B cell (primary cell): ENCODE measurements at regions of chr12 and their contacts with region 1.

Region 1: GRCh38 chr12:63843721-63844390 is 644 bp upstream of the SRGAP1 start:
- DNase-seq: peak; percentile 85
- ATAC-seq: peak; percentile 93
- H3K4me3 ChIP-seq: peak overlapping the region in 4 of 5 experiments; percentile 50 to 64 (median 60)
- H3K4me3 Mint-ChIP-seq: peak overlapping the region; percentile 79
- H3K27ac ChIP-seq: no peak overlapping the region
- H3K27ac Mint-ChIP-seq: no peak overlapping the region
- H3K4me1 ChIP-seq: peaks cover 8 to 13% of the 10 kb centered on the region in 2 donors
- H3K4me1 Mint-ChIP-seq: peaks cover 11% of the 10 kb centered on the region
- H3K27me3 ChIP-seq: peaks cover 0 to 17% (median 12%) of the 10 kb centered on the region in 4 experiments
- H3K27me3 Mint-ChIP-seq: peaks cover 29% of the 10 kb centered on the region
- CTCF ChIP-seq: peak; percentile 75

Region 2: GRCh38 chr12:63779498-63780481 is 64.1 kb before region 1 on chr12 and contains the start of gene RXYLT1:
- CTCF ChIA-PET with region 1: no interaction called
- POLR2A ChIA-PET with region 1: no interaction called
- intact Hi-C with region 1: loop called (anchors 2 kb)
- DNase-seq: peak; percentile 92
- ATAC-seq: peak; percentile 93
- H3K4me3 ChIP-seq: peak within 1 kb of the TSS; percentile 76 to 90 (median 85)
- H3K4me3 Mint-ChIP-seq: peak within 1 kb of the TSS; percentile 98
- H3K27ac ChIP-seq: peak within 1 kb of the TSS; percentile 77 to 91
- H3K27ac Mint-ChIP-seq: peak within 1 kb of the TSS; percentile 95
- H3K4me1 ChIP-seq: peaks cover 6 to 8% of the 10 kb centered on the region in 2 donors
- H3K4me1 Mint-ChIP-seq: peaks cover 16% of the 10 kb centered on the region
- H3K27me3 ChIP-seq: no peaks in the 10 kb centered on the region
- H3K27me3 Mint-ChIP-seq: no peaks in the 10 kb centered on the region
- CTCF ChIP-seq: no peak
- total RNA-seq, gene RXYLT1: 16.2 and 16.5 TPM in 2 replicates

Region 3: GRCh38 chr12:64222009-64222765 is 378.3 kb after region 1 on chr12 and contains the start of gene KICS2:
- CTCF ChIA-PET with region 1: no interaction called
- POLR2A ChIA-PET with region 1: no interaction called
- intact Hi-C with region 1: loop called (anchors 1 kb)
- DNase-seq: peak; percentile 98
- ATAC-seq: peak; percentile 86
- H3K4me3 ChIP-seq: peak within 1 kb of the TSS; percentile 58 to 89 (median 80)
- H3K4me3 Mint-ChIP-seq: peak within 1 kb of the TSS; percentile 93
- H3K27ac ChIP-seq: peak within 1 kb of the TSS; percentile 92 to 97
- H3K27ac Mint-ChIP-seq: peak within 1 kb of the TSS; percentile 96
- H3K4me1 ChIP-seq: peaks cover 10 to 20% of the 10 kb centered on the region in 2 donors
- H3K4me1 Mint-ChIP-seq: peaks cover 31% of the 10 kb centered on the region
- H3K27me3 ChIP-seq: peaks cover 0 to 3% (median 0%) of the 10 kb centered on the region in 4 experiments
- H3K27me3 Mint-ChIP-seq: peaks cover 8% of the 10 kb centered on the region
- CTCF ChIP-seq: no peak
- total RNA-seq, gene KICS2: 18.7 and 21.2 TPM in 2 replicates

Region 4: DNA sequence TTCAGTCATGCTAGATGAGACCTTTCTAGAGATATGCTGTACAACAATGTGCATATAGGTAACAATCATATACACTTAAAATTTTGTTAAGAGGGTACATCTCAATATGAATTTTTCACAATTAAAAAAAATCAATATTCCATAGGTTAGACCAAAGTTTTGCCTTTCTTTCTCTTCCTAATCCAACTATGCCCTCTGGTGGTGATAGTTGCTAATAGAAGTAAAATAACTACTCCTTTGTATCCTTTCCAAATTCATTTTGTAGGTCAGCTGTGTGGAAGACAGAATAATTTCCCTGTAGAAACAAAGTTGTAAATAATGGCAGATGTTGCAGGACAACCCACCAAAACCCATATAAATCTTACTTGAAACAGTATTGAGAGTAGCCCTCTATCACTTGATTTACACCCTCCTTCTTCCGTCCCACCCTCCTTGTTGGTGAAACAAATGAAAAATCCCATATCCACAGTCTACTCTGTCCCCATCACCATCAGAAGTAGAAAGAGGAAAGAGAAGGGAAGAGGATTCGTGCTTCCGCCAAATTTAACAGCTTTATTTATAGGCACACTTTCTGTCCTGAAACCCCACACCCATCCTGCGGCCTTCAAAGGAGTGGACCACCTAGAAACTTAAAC is 412.4 kb after region 1 on chr12:
- CTCF ChIA-PET with region 1: interaction called, 18 read pairs
- POLR2A ChIA-PET with region 1: no interaction called
- intact Hi-C with region 1: loop called (anchors 1 kb)
- DNase-seq: peak; percentile 62
- ATAC-seq: no peak
- H3K4me3 ChIP-seq: no peak overlapping the region
- H3K4me3 Mint-ChIP-seq: no peak overlapping the region
- H3K27ac ChIP-seq: no peak overlapping the region
- H3K27ac Mint-ChIP-seq: no peak overlapping the region
- H3K4me1 ChIP-seq: no peaks in the 10 kb centered on the region
- H3K4me1 Mint-ChIP-seq: no peaks in the 10 kb centered on the region
- H3K27me3 ChIP-seq: no peaks in the 10 kb centered on the region
- H3K27me3 Mint-ChIP-seq: no peaks in the 10 kb centered on the region
- CTCF ChIP-seq: peak; percentile 84

Region 5: GRCh38 chr12:64451687-64452558 is 608.1 kb after region 1 on chr12 and contains the start of gene TBK1:
- CTCF ChIA-PET with region 1: no interaction called
- POLR2A ChIA-PET with region 1: no interaction called
- intact Hi-C with region 1: loop called (anchors 5 kb)
- DNase-seq: peak; percentile 82
- ATAC-seq: peak; percentile 79
- H3K4me3 ChIP-seq: peak within 1 kb of the TSS; percentile 66 to 97 (median 90)
- H3K4me3 Mint-ChIP-seq: peak within 1 kb of the TSS; percentile 96
- H3K27ac ChIP-seq: peak within 1 kb of the TSS; percentile 63 to 77
- H3K27ac Mint-ChIP-seq: peak within 1 kb of the TSS; percentile 92
- H3K4me1 ChIP-seq: peaks cover 5 to 12% of the 10 kb centered on the region in 2 donors
- H3K4me1 Mint-ChIP-seq: peaks cover 38% of the 10 kb centered on the region
- H3K27me3 ChIP-seq: no peaks in the 10 kb centered on the region
- H3K27me3 Mint-ChIP-seq: no peaks in the 10 kb centered on the region
- CTCF ChIP-seq: peak; percentile 38
- total RNA-seq, gene TBK1: 38.5 and 46.9 TPM in 2 replicates